Activated CD4-positive, alpha-beta memory T cell treated with anti-CD3 and anti-CD28 coated beads for 36 hours (primary cell): ENCODE measurements at regions of chr5 and their contacts with region 1.

Region 1: GRCh38 chr5:134904630-134905245 is at the start of gene PCBD2:
- DNase-seq: peak; percentile 96
- H3K4me3 Mint-ChIP-seq: peak within 1 kb of the TSS; percentile 95
- H3K27ac Mint-ChIP-seq: peak within 1 kb of the TSS; percentile 99
- H3K4me1 Mint-ChIP-seq: peaks cover 17% of the 10 kb centered on the region
- H3K27me3 Mint-ChIP-seq: no peaks in the 10 kb centered on the region
- total RNA-seq, gene PCBD2: 9.8 to 13.2 TPM

Region 2: DNA sequence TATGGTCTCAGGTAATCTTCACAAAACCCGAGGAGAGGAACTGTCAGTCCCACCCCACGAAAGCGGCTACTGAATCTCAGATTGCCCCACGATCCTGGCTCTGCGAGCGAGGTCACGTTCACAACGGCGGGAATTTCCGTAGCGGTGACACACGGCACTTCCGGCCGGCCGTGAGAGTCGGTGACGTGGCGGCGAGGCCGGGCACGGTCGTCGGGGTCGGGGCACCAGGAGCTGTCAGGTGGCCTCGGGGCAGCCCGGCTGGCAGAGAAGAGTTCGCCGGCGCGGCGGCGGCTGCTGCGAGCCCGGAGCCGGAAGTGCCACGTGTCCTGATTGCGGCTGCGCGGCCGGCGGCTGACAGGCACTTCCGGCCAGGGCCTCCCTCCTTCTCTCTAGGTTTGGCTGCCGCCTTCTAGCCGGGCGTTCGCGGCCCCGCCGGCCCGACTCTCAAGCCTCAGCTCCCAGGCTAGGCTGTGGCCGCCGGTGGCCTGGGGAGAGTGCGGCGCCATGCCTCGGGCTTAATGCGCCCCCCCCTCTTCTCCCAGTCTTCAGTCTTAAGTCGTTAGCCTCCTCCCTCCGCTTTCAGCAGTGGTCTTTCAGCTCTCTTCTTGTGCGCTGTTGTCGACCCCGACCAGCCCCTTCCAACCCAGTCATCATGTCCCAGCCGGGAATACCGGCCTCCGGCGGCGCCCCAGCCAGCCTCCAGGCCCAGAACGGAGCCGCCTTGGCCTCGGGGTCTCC is 256.1 kb before region 1 on chr5 and contains the start of gene SEC24A:
- CTCF ChIA-PET with region 1: no interaction called
- POLR2A ChIA-PET with region 1: interaction called, 3 read pairs
- intact Hi-C with region 1: loop called (anchors 2 kb)
- DNase-seq: peak; percentile 95
- H3K4me3 Mint-ChIP-seq: peak within 1 kb of the TSS; percentile 81
- H3K27ac Mint-ChIP-seq: peak within 1 kb of the TSS; percentile 99
- H3K4me1 Mint-ChIP-seq: peaks cover 22% of the 10 kb centered on the region
- H3K27me3 Mint-ChIP-seq: no peaks in the 10 kb centered on the region
- total RNA-seq, gene SEC24A: 30.8 to 31.4 TPM

Region 3: DNA sequence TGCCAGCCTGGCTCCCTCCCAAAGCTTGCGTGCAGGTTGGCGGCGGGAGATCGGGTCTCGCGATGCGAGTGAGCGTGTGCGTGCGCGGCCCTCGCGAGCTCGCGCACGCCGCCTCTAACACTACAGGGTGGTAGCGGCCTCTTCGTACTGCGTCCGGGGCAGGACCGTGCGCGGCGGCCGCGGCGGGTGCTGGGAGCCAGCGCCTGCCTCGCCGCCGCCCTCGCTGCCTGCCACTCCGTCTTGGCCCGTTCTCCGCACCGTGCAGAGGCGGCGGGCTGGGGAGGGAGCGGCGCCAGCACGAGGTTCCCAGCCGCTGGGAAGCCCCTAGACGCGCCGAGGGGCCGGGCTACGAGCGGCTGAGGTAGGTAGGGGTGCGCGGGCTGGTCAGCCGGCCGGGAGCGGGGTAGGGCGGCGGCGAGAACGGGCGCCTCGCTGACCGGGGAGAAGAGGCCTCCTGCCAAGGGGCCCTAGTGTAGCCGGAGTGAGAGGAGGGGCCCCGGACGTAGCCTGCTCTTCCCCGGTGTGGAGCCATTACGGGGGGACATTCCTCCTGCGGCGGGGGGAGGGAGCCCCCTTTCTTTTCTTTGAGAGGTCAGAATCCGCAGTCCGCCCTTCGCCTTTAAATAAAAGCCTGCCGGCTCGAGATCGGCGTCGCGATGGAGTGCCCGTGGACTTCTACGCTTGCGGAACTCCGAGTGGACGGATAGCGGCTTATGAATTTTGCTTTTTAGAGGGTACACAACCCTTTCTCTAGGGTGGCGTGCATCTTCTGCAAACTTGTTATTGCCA is 58.7 kb before region 1 on chr5 and contains the start of gene C5orf24:
- CTCF ChIA-PET with region 1: interaction called, 20 read pairs
- POLR2A ChIA-PET with region 1: interaction called, 34 read pairs
- intact Hi-C with region 1: loop called (anchors 1 kb)
- DNase-seq: peak; percentile 96
- H3K4me3 Mint-ChIP-seq: peak within 1 kb of the TSS; percentile 86
- H3K27ac Mint-ChIP-seq: peak within 1 kb of the TSS; percentile 96
- H3K4me1 Mint-ChIP-seq: peaks cover 28% of the 10 kb centered on the region
- H3K27me3 Mint-ChIP-seq: no peaks in the 10 kb centered on the region
- total RNA-seq, gene C5orf24: 21.9 to 25.2 TPM

Region 4: GRCh38 chr5:134873987-134874830 is 30.5 kb before region 1 on chr5 and contains the start of gene TXNDC15:
- CTCF ChIA-PET with region 1: interaction called, 19 read pairs
- POLR2A ChIA-PET with region 1: interaction called, 16 read pairs
- intact Hi-C with region 1: loop called (anchors 1 kb)
- DNase-seq: peak; percentile 89
- H3K4me3 Mint-ChIP-seq: peak within 1 kb of the TSS; percentile 95
- H3K27ac Mint-ChIP-seq: peak within 1 kb of the TSS; percentile 94
- H3K4me1 Mint-ChIP-seq: peaks cover 36% of the 10 kb centered on the region
- H3K27me3 Mint-ChIP-seq: no peaks in the 10 kb centered on the region
- total RNA-seq, gene TXNDC15: 29.6 to 30.9 TPM

Region 5: GRCh38 chr5:135039271-135040045 is 134.7 kb after region 1 on chr5:
- CTCF ChIA-PET with region 1: no interaction called
- POLR2A ChIA-PET with region 1: no interaction called
- intact Hi-C with region 1: no loop called
- DNase-seq: peak; percentile 34
- H3K4me3 Mint-ChIP-seq: no peak overlapping the region
- H3K27ac Mint-ChIP-seq: no peak overlapping the region
- H3K4me1 Mint-ChIP-seq: peaks cover 12% of the 10 kb centered on the region
- H3K27me3 Mint-ChIP-seq: peaks cover 72% of the 10 kb centered on the region